Right lobe of liver (tissue), 6 donors: ENCODE measurements at regions of chr1 and their contacts with region 1.

Region 1: DNA sequence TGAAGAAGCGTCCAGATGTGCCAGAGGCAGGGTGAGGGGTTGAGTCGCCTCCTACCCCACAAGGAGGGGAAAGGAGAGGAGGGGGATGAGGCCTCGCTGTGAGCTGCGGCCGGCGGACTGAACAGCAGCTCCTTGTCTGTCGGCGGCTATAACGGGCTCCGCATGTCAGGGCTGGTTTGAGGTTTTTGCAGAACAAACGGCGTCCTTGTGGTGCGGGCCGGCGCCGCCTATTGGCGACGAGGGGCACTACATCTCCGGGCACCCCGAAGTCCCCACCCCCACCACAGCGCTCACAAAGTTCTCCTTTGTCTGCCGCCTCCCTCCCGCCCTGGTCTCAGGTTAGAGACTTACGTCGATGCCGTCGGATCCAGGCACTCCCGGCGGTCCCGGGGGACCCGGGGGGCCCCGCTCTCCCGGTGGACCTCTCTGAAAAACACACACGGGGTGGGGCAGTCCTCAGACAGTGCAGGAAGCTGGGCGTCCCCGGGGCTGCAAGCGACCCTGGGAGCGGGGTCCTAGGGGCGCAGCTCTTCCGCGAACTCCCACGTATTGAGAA is 1.8 kb downstream of the COL9A2 start:
- DNase-seq: peak; percentile 76 to 85 (median 79)
- ATAC-seq: peak; percentile 86 to 95 (median 90)
- H3K4me3 ChIP-seq: peak overlapping the region; percentile 29 to 48 (median 35)
- H3K27ac ChIP-seq: no peak overlapping the region
- H3K4me1 ChIP-seq: peaks cover 0 to 13% (median 0%) of the 10 kb centered on the region in 4 donors
- H3K27me3 ChIP-seq: peaks cover 0 to 14% of the 10 kb centered on the region in 2 donors
- CTCF ChIP-seq: peak; percentile 78 to 95 (median 81)
- POLR2A ChIP-seq: no peak

Region 2: GRCh38 chr1:40143891-40144575 is 171.3 kb before region 1 on chr1:
- intact Hi-C with region 1: loop called (anchors 10 kb)
- DNase-seq: peak in 1 of 3 donors; percentile 69
- ATAC-seq: peak; percentile 93 to 95 (median 94)
- H3K4me3 ChIP-seq: no peak overlapping the region
- H3K27ac ChIP-seq: no peak overlapping the region
- H3K4me1 ChIP-seq: no peaks in the 10 kb centered on the region
- H3K27me3 ChIP-seq: no peaks in the 10 kb centered on the region
- CTCF ChIP-seq: peak; percentile 68 to 81 (median 77)
- POLR2A ChIP-seq: no peak

Region 3: DNA sequence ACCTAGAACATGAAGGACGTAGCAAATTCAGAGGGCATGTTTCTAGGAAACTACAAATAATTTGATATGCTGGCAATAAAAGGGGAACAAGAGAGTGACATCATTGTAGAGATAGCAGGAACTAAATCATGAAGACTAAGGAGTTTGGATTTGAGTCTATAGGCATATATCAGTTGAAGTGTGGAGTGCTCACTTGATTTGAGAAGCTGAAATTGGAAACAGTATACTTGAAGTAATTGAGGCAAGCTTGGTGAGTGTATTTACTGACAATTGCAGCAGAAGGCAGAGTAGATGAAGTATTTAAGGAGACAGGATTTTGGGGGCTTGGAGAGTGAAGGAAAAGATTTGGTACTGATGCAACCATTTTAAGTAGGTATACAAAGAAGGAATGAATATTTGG is 74.0 kb before region 1 on chr1:
- intact Hi-C with region 1: no loop called
- DNase-seq: no peak
- ATAC-seq: no peak
- H3K4me3 ChIP-seq: no peak overlapping the region
- H3K27ac ChIP-seq: no peak overlapping the region
- H3K4me1 ChIP-seq: no peaks in the 10 kb centered on the region
- H3K27me3 ChIP-seq: no peaks in the 10 kb centered on the region
- CTCF ChIP-seq: no peak
- POLR2A ChIP-seq: no peak

Region 4: GRCh38 chr1:40267767-40268187 is 47.5 kb before region 1 on chr1:
- intact Hi-C with region 1: no loop called
- DNase-seq: no peak
- ATAC-seq: peak; percentile 91 to 96 (median 93)
- H3K4me3 ChIP-seq: no peak overlapping the region
- H3K27ac ChIP-seq: peak overlapping the region; percentile 60 to 83 (median 69)
- H3K4me1 ChIP-seq: peaks cover 0 to 16% (median 3%) of the 10 kb centered on the region in 4 donors
- H3K27me3 ChIP-seq: no peaks in the 10 kb centered on the region
- CTCF ChIP-seq: no peak
- POLR2A ChIP-seq: no peak